ENCODE measurements at regions of chr12 and their contacts with region 1.

Region 1: DNA sequence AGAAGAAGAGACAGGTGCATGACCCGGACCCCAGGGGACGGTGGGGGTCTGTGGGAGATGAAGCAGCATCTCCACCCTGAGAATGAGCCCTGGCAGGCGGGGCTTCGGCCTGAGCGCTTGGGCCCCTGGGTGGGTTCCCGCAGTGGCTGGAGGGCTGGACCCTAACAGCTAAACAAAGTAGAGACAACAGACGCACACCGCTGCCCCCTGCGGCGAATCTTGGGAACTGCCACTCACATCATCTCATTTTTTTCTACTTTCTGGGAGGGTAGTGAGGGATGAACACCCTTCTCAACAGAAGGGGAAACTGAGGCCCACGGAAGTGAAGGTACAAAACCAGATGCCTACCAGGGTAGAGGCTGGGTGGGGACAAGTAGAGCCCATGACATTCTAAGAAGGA is 104.7 kb downstream of the RFLNA start:
- DNase-seq: no peak
- ATAC-seq: peak; percentile 59
- H3K4me3 ChIP-seq: no peak overlapping the region
- H3K27ac ChIP-seq: no peak overlapping the region
- H3K4me1 ChIP-seq: no peaks in the 10 kb centered on the region
- H3K27me3 ChIP-seq: no peaks in the 10 kb centered on the region
- CTCF ChIP-seq: peak; percentile 42 to 64 (median 61)
- EP300 ChIP-seq: no peak
- POLR2A ChIP-seq: no peak
- RAD21 ChIP-seq: peak; percentile 44

Region 2: DNA sequence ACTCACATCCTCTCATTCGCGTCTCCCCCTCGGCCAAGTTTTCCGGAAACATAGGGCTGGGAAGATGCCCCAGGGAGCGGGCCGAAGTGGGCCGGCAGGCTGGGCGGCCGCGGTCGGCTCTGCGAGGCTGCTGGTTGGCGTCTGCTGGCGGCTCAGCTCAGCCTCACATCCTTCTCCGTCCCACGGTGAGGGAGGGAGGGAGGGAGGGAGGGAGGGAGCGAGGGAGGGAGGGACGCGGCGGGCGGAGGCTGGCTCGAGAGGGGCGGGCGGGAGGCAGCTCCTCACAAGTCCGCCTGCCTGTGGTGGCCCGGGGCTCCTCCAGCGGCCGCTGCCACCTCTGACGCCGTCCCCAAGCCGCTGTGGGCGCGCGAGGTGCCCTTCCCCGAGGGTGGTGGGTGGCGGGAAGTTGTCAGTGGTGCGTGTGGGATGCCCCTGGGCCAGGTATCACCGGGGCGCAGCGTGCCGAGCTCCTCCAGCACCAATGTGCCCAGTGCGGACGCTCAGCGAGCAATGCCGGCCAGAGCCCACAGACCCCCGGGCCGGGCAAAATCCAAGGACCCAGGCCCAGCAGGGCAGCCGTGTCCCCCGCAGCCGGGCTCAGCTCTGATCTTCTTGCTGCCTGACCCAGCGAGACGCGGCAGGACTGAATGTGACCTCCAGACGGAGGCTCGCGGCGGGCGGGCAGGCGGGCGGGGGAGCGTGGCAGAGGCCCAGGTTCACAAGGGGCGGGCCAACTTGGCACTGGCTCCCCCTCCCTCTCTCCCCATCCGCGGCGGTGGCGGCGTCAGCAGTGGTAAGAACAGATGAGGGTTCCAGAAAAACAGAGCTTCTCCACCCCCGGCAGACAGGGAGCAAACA is 10.7 kb before region 1 on chr12:
- CTCF ChIA-PET with region 1: interaction called, 11 read pairs
- POLR2A ChIA-PET with region 1: no interaction called
- RAD21 ChIA-PET with region 1: no interaction called
- SMC1A ChIA-PET with region 1: no interaction called
- in situ Hi-C with region 1: no loop called
- intact Hi-C with region 1: no loop called
- DNase-seq: no peak
- ATAC-seq: peak; percentile 48
- H3K4me3 ChIP-seq: no peak overlapping the region
- H3K27ac ChIP-seq: no peak overlapping the region
- H3K4me1 ChIP-seq: peaks cover 40% of the 10 kb centered on the region
- H3K27me3 ChIP-seq: no peaks in the 10 kb centered on the region
- CTCF ChIP-seq: no peak
- EP300 ChIP-seq: no peak
- POLR2A ChIP-seq: no peak; the same call in 1 of the 2 replicates
- RAD21 ChIP-seq: no peak